Tibial artery (tissue), 4 donors: ENCODE measurements at regions of chr15 and their contacts with region 1.

Region 1: DNA sequence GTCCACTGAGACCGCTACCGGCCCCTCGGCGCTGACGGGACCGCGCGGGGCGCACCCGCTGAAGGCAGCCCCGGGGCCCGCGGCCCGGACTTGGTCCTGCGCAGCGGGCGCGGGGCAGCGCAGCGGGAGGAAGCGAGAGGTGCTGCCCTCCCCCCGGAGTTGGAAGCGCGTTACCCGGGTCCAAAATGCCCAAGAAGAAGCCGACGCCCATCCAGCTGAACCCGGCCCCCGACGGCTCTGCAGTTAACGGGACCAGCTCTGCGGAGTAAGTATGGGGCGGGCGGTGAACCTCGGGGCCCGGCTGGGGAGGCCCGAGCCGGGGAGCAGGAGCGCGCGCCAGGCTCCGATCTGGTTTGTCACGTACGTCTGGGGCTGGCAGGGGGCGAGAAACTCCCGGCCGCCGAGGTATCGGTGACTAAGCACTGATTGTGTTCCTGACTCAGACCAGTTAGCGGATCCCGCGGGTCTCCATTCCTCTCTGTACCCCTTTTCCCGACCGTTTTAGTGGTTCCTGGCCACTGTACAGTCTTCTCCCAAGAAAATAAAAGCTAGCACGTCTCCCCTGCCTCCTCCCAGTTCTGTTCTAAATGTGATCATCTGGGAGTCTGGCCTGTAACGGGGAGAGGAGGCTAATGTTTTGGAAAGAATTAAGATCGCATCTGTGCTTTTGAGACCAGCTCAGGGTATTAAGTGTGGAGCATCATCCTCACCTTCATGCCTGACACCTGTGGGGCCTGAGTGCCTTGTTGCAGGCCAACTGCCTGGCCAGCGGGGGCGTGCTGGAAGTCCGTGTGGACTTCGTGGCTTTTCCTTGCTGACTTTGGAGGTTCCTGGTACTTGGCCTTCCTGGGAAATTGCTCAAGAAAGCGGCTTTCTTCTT is 691 bp downstream of the MAP2K1 start:
- DNase-seq: peak; percentile 62 to 84
- H3K4me3 ChIP-seq: peak overlapping the region; percentile 78 to 94
- H3K27ac ChIP-seq: peak overlapping the region; percentile 94 to 96
- H3K4me1 ChIP-seq: peaks cover 0 to 47% (median 23%) of the 10 kb centered on the region in 4 donors
- H3K27me3 ChIP-seq: no peaks in the 10 kb centered on the region
- CTCF ChIP-seq: peak in 1 of 2 experiments; percentile 19

Region 2: DNA sequence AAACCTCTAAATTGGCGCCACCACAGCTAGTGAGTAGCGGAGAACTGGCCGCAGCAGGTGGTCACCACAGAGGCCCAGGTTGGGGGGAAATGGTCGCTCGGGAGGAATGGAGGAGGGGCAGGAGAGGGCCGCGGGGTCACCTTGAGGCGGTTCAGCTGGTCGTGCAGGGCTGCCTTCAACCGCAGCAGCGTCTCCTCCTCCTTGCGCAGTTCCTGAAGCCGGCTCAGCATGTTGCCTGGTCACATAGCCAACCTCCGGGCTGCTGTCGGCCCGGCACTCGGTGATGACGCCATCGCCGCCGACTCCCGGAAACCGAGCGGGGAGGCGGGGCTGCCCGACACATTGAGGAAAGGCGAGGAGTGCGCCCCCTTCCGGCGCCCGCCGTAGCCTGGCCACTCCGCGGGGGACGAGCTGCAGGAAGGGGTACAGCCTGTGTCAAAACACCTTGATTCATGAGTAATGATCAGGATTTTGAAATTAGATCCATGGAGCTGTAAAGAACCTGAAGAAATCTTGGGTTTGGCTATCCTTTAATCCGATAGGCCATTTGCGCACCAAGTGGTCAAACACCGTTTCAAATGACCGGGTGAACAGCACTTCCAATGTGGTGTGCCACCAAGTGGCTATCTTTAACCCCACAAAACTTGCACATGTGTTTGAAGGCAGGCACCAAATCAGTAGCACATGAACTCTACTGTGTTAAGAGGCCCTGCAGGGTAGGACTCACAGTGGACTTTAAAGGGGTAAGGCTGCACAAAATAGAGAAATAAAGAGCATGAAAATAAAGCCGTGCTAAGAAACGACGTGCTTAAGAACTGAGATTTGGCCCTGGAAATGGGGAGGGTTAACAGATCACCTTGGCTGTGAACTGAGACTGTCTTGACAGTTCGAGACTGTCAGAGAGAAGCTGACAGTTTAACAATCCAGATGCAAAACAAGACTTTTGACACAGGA is 110.4 kb after region 1 on chr15 and contains the start of gene SNAPC5:
- intact Hi-C with region 1: loop called (anchors 2 kb)
- DNase-seq: peak; percentile 97 to 98
- H3K4me3 ChIP-seq: peak within 1 kb of the TSS; percentile 89
- H3K27ac ChIP-seq: peak within 1 kb of the TSS; percentile 79 to 91
- H3K4me1 ChIP-seq: peaks cover 0 to 24% (median 11%) of the 10 kb centered on the region in 4 donors
- H3K27me3 ChIP-seq: no peaks in the 10 kb centered on the region
- CTCF ChIP-seq: peak; percentile 97 to 100